Upper lobe of right lung (tissue), 1 donor: ENCODE measurements at regions of chr10 and their contacts with region 1.

Region 1: GRCh38 chr10:80509403-80510161 is 28.1 kb upstream of the SH2D4B start:
- DNase-seq: no peak
- ATAC-seq: peak; percentile 18
- H3K4me3 ChIP-seq: no peak overlapping the region
- H3K27ac ChIP-seq: peak overlapping the region; percentile 44
- H3K4me1 ChIP-seq: peaks cover 52% of the 10 kb centered on the region
- H3K27me3 ChIP-seq: no peaks in the 10 kb centered on the region
- CTCF ChIP-seq: no peak

Region 2: DNA sequence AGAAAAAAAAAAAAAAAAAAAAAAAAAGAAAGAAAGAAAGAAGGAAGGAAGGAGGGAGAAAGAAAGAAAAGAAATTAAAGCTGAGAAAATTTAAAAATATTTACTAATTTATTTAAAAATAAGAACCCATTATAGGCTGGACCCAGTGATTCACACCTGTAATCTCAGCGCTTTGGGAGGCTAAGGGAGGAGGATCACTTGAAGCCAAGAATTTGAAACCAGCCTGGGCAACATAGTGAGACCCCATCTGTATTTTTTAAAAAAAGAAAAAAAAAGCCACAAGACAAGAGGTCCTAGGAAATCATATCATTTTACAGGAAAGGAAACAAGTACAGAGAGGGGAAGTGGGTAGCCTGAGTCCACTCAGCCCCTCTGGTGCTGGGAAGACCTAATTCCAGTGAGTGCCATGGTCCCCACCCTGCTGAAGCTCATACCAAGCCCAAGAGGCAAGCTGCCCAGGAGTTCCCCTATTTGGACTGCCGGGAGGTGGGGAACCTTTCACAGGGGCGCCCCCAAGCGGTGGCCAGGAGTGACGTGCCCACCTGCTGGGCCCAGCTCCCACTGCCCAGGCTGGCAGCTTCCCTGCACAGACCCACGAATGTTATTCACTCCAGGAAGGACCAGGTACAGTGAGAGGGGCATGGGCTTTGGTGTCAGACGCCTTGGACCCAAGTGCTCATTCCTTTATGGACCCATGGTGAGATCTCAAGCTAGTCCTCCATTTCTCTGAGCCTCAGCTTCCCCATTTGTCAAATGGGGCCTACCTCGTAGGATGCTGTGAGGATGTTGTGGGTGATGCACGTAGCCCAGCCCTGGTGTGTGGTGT is 1307.2 kb before region 1 on chr10:
- intact Hi-C with region 1: no loop called
- DNase-seq: peak; percentile 79
- ATAC-seq: peak; percentile 77
- H3K4me3 ChIP-seq: no peak overlapping the region
- H3K27ac ChIP-seq: no peak overlapping the region
- H3K4me1 ChIP-seq: peaks cover 6% of the 10 kb centered on the region
- H3K27me3 ChIP-seq: no peaks in the 10 kb centered on the region
- CTCF ChIP-seq: peak; percentile 52

Region 3: GRCh38 chr10:80421707-80422536 is 87.7 kb before region 1 on chr10:
- intact Hi-C with region 1: no loop called
- DNase-seq: no peak
- ATAC-seq: no peak
- H3K4me3 ChIP-seq: no peak overlapping the region
- H3K27ac ChIP-seq: no peak overlapping the region
- H3K4me1 ChIP-seq: no peaks in the 10 kb centered on the region
- H3K27me3 ChIP-seq: no peaks in the 10 kb centered on the region
- CTCF ChIP-seq: no peak

Region 4: GRCh38 chr10:80449520-80449919 is 60.1 kb before region 1 on chr10:
- intact Hi-C with region 1: no loop called
- DNase-seq: no peak
- ATAC-seq: peak; percentile 7
- H3K4me3 ChIP-seq: no peak overlapping the region
- H3K27ac ChIP-seq: peak overlapping the region; percentile 77
- H3K4me1 ChIP-seq: peaks cover 15% of the 10 kb centered on the region
- H3K27me3 ChIP-seq: no peaks in the 10 kb centered on the region
- CTCF ChIP-seq: no peak

Region 5: GRCh38 chr10:80460399-80461207 is 49.0 kb before region 1 on chr10:
- intact Hi-C with region 1: loop called (anchors 5 kb)
- DNase-seq: peak; percentile 85
- ATAC-seq: peak; percentile 77
- H3K4me3 ChIP-seq: peak overlapping the region; percentile 34
- H3K27ac ChIP-seq: peak overlapping the region; percentile 98
- H3K4me1 ChIP-seq: peaks cover 95% of the 10 kb centered on the region
- H3K27me3 ChIP-seq: no peaks in the 10 kb centered on the region
- CTCF ChIP-seq: no peak